Transverse colon (tissue), 4 donors: ENCODE measurements at regions of chr17 and their contacts with region 1.

Region 1: DNA sequence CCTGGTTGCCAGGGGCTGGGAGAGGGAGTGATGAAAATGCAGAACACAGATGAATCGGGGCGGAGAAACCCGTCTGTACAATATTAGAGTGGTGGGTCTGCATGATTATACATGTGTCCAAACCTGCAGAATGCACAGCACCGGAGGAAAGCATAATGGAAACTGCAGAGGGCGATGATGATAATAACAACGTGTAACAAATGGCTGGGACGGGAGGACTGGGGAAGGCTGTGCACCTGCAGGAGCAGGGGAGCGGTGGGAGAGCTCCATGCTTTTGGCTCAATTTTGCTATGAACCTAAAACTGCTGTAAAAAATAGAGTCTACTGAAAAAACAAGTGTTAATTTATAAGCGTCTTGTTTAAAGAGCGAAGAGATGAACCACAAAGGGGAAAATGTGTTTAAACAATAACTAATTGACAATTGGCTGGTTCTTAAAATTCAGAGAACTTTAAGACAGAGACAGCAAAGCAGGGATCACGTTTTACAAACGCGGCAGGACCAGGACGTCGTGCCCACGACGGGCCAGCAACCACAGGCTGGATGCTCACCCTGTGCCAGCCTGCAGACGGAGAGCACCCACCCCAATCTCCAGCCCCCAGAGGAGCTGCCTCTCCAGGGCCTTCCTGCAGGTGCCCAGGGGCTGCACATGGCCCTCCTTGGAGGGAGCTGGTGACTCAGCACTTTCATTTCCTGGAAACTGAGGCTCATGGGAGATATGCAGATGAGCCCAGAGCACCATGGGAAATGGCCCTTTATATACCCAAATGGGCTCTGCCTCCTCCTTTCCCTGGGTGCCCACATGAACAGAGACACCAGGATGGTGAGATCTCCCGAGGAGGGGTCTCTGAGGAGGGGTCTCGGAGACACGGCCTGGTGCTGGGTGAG is at the start of gene TEX19:
- DNase-seq: no peak
- H3K4me3 ChIP-seq: no peak within 1 kb of the TSS
- H3K27ac ChIP-seq: no peak within 1 kb of the TSS
- H3K4me1 ChIP-seq: no peaks in the 10 kb centered on the region
- H3K27me3 ChIP-seq: peaks cover 38% of the 10 kb centered on the region
- CTCF ChIP-seq: no peak
- EP300 ChIP-seq: no peak
- POLR2A ChIP-seq: no peak
- total RNA-seq, gene TEX19: not detected

Region 2: GRCh38 chr17:82273327-82274133 is 85.2 kb before region 1 on chr17 and contains the start of gene CSNK1D:
- in situ Hi-C with region 1: no loop called
- intact Hi-C with region 1: no loop called
- DNase-seq: peak; percentile 95
- H3K4me3 ChIP-seq: peak within 1 kb of the TSS; percentile 71 to 95 (median 86)
- H3K27ac ChIP-seq: peak within 1 kb of the TSS; percentile 96 to 100 (median 98)
- H3K4me1 ChIP-seq: peaks cover 39 to 53% (median 48%) of the 10 kb centered on the region in 4 donors
- H3K27me3 ChIP-seq: no peaks in the 10 kb centered on the region
- CTCF ChIP-seq: peak in 1 of 5 experiments; percentile 9
- EP300 ChIP-seq: peak; percentile 36
- POLR2A ChIP-seq: peak; percentile 96
- total RNA-seq, gene CSNK1D: 86.0 to 230 (median 148) TPM

Region 3: GRCh38 chr17:82407255-82407654 is 48.5 kb after region 1 on chr17:
- in situ Hi-C with region 1: loop called in 2 of 4 experiments (anchors 5 to 10 kb)
- intact Hi-C with region 1: loop called (anchors 5 kb)
- DNase-seq: no peak
- H3K4me3 ChIP-seq: no peak overlapping the region
- H3K27ac ChIP-seq: no peak overlapping the region
- H3K4me1 ChIP-seq: no peaks in the 10 kb centered on the region
- H3K27me3 ChIP-seq: no peaks in the 10 kb centered on the region
- CTCF ChIP-seq: no peak
- EP300 ChIP-seq: no peak
- POLR2A ChIP-seq: no peak

Region 4: GRCh38 chr17:82418001-82418986 is 59.6 kb after region 1 on chr17 and contains the starts of genes HEXD and OGFOD3:
- in situ Hi-C with region 1: loop called in 2 of 4 experiments (anchors 5 to 10 kb)
- intact Hi-C with region 1: loop called (anchors 5 kb)
- DNase-seq: peak; percentile 90
- H3K4me3 ChIP-seq: peak within 1 kb of the TSS; percentile 74 to 80 (median 75)
- H3K27ac ChIP-seq: peak within 1 kb of the TSS; percentile 87 to 97 (median 92)
- H3K4me1 ChIP-seq: peaks cover 4 to 26% (median 20%) of the 10 kb centered on the region in 4 donors
- H3K27me3 ChIP-seq: no peaks in the 10 kb centered on the region
- CTCF ChIP-seq: peak in 2 of 5 experiments; percentile 1 to 22
- EP300 ChIP-seq: no peak
- POLR2A ChIP-seq: peak; percentile 55
- total RNA-seq, gene HEXD: 45.5 to 258 (median 102) TPM
- total RNA-seq, gene OGFOD3: 7.9 to 27.5 (median 25.9) TPM